PC-9 (cell line): ENCODE measurements at regions of chr5 and their contacts with region 1.

Region 1: DNA sequence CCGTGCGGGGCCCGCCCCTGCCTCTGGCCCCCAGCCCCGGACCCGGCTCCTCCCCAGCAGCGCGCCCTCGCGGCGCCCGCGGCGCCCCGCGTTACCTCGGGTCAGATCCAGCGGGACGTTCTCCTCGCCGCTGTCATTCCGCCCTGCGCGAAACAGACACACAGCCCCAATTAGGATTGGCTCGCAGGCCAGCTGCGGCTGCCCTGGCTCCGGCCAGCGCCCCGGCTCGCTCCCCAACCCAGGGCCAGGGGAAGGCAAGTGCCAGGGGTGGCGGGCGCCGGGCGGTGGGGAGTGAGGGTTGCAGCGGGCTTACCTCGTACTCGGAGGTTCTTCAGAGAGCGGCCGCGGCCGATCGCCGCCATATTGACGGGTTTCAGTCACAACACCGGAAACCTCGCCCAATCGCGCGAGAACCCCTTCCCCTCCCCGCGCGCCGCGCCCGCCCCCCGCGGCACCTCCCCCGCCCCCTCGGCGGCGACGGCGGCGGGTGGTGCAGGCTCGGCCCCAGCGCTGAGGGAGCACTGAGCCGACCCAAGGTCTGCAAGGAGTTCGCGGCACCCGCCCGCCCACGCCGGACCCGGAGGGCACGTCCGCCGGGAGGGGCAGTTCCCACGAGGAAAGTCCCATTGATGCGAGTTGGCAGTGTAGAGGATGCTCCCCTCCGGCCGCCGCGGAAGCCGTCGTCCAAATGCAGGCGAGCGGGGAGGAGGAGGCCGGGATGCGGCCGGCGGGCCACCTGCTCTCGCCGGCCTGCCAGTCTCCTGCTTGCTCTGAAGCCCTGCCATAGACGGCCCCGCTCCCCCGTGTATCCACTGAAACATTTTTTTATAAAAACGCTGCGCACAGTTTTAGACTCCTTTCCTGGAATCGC is at the start of gene RICTOR:
- DNase-seq: peak; percentile 67 to 99
- H3K4me3 ChIP-seq: peak within 1 kb of the TSS; percentile 93
- H3K27ac ChIP-seq: peak within 1 kb of the TSS; percentile 96
- H3K4me1 ChIP-seq: peaks cover 41% of the 10 kb centered on the region
- H3K27me3 ChIP-seq: no peaks in the 10 kb centered on the region
- CTCF ChIP-seq: no peak
- total RNA-seq, gene RICTOR: 103 and 121 TPM in 2 replicates

Region 2: DNA sequence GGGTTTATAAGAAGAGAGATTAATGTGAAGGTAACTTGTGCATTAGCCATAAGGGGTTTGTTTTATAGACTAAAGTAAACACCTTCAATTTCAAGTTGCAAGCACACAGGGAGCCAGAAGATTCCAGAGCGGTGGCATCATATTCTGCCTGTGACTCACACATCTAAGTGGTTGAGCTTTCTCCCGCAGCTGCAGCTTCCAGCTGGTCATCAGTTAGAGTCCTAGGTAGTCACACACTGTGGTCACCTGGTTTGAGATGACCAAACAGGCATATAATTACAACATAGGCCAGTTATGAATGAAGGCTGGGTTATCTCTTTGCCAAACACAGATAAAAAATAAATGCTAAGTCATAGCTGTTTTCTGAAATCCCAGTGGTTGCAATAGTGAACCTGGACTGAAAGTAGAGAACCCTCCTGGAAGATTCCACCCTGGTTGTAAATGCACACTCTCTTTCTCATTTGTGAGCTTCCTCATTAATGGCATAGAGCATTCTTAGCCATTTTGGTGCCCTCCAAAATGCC is 1405.7 kb before region 1 on chr5:
- CTCF ChIA-PET with region 1: no interaction called
- POLR2A ChIA-PET with region 1: interaction called, 18 read pairs
- intact Hi-C with region 1: no loop called
- DNase-seq: peak; percentile 94 to 100
- H3K4me3 ChIP-seq: peak overlapping the region; percentile 21; the same call in 1 of the 2 replicates
- H3K27ac ChIP-seq: peak overlapping the region; percentile 90
- H3K4me1 ChIP-seq: peaks cover 23% of the 10 kb centered on the region
- H3K27me3 ChIP-seq: no peaks in the 10 kb centered on the region
- CTCF ChIP-seq: no peak

Region 3: GRCh38 chr5:38994324-38994927 is 79.8 kb before region 1 on chr5:
- CTCF ChIA-PET with region 1: interaction called, 5 read pairs
- POLR2A ChIA-PET with region 1: no interaction called
- intact Hi-C with region 1: loop called (anchors 5 kb)
- DNase-seq: peak; percentile 50 to 73
- H3K4me3 ChIP-seq: no peak overlapping the region
- H3K27ac ChIP-seq: no peak overlapping the region
- H3K4me1 ChIP-seq: no peaks in the 10 kb centered on the region
- H3K27me3 ChIP-seq: no peaks in the 10 kb centered on the region
- CTCF ChIP-seq: peak; percentile 80

Region 4: GRCh38 chr5:39100851-39101396 is 26.7 kb after region 1 on chr5:
- CTCF ChIA-PET with region 1: interaction called, 3 read pairs
- POLR2A ChIA-PET with region 1: no interaction called
- intact Hi-C with region 1: loop called (anchors 1 kb)
- DNase-seq: peak; percentile 96 to 100
- H3K4me3 ChIP-seq: peak overlapping the region; percentile 41; the same call in 1 of the 2 replicates
- H3K27ac ChIP-seq: peak overlapping the region; percentile 98
- H3K4me1 ChIP-seq: peaks cover 60% of the 10 kb centered on the region
- H3K27me3 ChIP-seq: no peaks in the 10 kb centered on the region
- CTCF ChIP-seq: no peak

Region 5: DNA sequence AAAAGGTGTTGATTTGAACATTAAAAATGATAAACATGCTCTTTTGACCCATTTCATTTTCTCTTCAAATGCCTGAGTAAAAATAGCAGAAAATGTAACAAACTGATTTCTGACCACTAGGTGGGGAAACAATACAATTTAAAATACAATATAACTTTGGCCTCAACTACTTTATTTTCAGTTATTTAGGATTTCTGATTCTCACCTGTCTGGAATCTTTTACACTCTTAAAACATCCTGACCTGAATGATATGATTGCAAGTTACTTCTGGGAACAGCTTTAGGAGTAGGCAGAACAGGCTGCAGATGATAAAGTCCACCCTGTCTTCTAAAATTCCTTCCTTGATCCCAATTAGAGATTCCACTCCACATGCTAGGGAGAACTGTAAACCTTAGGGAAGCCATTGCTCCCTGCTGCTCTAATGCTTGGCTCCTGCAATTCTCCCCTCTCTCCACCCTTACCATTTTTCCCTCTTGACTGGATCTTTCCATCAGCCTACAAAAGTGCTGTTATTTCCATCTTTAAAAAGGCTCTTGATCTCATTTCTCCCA is 74.8 kb after region 1 on chr5:
- CTCF ChIA-PET with region 1: no interaction called
- POLR2A ChIA-PET with region 1: no interaction called
- intact Hi-C with region 1: loop called (anchors 2 kb)
- DNase-seq: no peak
- H3K4me3 ChIP-seq: no peak overlapping the region
- H3K27ac ChIP-seq: no peak overlapping the region; the same call in 1 of the 2 replicates
- H3K4me1 ChIP-seq: peaks cover 6% of the 10 kb centered on the region
- H3K27me3 ChIP-seq: no peaks in the 10 kb centered on the region
- CTCF ChIP-seq: peak; percentile 76

Region 6: DNA sequence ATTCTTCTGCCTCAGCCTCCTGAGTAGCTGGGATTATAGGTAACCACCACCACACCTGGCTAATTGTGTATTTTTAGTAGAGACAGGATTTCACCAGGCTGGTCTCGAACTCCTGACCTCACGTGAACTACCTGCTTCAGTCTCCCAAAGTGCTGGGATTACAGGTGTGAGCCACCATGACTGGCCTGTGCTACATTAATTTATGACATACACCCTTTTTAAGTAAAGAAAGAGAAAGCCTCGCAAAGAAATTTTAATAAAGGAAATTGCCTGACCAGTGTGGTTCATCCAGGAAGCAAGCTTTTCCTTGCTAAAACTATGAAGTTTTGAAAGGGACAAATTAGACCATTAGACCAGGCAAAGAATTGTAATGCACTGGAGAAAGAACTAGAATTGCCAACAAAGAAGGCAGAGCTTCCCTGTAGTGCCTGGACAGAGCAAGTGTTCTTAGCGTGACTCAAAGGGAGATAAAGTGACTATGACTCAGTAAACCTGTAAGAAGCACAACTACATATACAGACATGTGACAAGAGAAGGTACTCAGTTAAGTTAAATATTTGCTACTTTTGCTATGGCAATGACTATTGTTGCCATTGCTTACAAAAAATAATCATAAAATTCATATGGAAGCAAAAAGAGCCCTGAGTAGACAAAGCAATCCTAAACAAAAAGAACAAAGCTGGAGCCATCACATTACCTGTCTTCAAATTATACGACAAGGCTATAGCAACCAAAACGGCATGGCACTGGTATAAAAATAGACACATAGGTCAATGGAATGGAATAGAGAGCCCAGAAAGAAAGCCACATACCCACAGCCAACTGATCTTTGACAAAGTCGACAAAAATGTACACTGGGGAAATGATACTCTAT is 90.5 kb after region 1 on chr5:
- CTCF ChIA-PET with region 1: no interaction called
- POLR2A ChIA-PET with region 1: no interaction called
- intact Hi-C with region 1: no loop called
- DNase-seq: no peak
- H3K4me3 ChIP-seq: no peak overlapping the region
- H3K27ac ChIP-seq: no peak overlapping the region
- H3K4me1 ChIP-seq: peaks cover 14% of the 10 kb centered on the region
- H3K27me3 ChIP-seq: no peaks in the 10 kb centered on the region
- CTCF ChIP-seq: no peak

Region 7: DNA sequence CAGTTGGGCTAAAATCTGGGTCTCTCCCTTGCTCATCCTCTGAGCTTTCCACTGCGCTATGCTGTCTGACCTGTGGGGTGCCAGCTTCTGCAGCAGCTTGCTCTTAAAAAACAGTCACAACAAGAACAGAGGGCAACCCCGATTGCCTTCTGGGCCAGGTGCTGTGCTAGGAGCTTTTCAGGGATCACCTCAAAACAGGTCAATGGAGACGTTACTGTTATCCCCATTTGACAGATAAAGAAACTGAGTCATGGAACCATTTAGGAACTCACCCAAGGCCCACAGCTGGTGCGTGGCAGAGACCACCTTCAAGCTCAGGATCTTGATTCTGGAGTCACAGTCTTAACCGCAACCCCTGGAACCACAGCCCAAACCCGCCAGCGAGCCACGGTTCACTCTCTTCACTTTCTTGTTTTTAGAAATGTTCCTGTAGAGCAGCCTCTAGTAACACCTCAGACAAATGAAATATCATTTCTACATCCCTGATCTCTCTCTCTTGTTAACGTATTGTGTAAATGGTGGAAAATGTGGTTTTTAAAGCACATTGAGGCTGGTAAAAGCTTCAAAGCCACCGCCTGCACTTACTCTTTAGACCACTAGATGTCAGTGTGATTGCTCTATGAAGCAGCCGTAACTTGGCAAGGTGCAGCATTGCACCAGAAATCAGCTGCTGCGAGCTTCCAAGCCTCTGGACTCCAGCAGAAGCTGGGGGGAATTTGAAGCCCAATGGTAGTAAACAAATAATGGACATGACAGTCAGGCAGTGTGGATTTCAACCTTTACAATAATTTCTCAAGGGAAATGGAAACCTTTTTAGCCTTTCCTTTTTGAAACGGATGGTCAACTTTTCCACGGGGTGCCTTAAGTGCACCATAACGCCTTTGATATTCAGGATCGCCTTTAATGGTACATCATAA is 143.4 kb after region 1 on chr5:
- CTCF ChIA-PET with region 1: no interaction called
- POLR2A ChIA-PET with region 1: interaction called, 5 read pairs
- intact Hi-C with region 1: loop called (anchors 2 kb)
- DNase-seq: peak; percentile 80
- H3K4me3 ChIP-seq: no peak overlapping the region
- H3K27ac ChIP-seq: peak overlapping the region; percentile 69
- H3K4me1 ChIP-seq: peaks cover 52% of the 10 kb centered on the region
- H3K27me3 ChIP-seq: no peaks in the 10 kb centered on the region
- CTCF ChIP-seq: peak; percentile 99

Region 8: DNA sequence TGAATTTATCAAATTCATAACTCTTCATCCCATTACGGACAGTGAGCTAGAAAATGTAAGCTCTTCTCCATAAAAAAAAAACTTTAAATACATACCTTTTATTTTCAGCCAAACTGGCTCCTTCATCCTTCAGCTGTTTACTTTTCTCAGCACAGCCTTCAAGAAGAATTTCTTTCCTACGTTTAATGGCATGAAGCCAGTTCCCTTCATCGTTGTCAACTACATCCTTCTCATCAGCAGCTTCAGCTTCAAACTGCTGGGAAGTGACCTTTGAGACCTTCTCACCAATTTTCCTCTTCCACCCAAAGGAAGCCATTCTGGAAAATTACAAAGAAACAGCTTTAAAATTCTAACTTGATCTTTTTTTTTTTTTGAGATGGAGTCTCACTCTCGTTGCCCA is 1672.5 kb after region 1 on chr5:
- CTCF ChIA-PET with region 1: no interaction called
- POLR2A ChIA-PET with region 1: interaction called, 19 read pairs
- intact Hi-C with region 1: no loop called
- DNase-seq: no peak
- H3K4me3 ChIP-seq: no peak overlapping the region
- H3K27ac ChIP-seq: no peak overlapping the region
- H3K4me1 ChIP-seq: no peaks in the 10 kb centered on the region
- H3K27me3 ChIP-seq: no peaks in the 10 kb centered on the region
- CTCF ChIP-seq: no peak